Left lung (tissue), 14 donors: ENCODE measurements at regions of chr1 and their contacts with region 1.

Region 1: DNA sequence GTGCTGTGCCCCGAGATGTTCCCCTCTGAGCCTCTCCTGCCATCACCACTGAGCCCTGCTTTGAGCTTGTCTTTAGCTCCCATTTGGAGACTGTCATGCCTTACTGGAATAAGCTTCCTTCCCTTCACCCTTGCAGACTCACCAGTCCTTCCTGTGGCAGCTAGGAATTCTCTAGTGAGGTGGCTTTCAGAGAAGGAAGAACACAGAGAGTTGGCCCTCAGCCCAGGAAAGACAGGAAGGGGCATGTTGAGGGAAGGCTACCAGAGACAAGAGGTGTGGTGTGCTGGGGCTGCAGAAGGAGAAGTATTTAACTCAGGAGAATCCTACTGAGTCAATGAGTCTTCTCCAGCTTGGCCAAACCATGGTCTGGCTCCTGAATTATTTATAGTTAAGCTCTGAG is 76.3 kb downstream of the UCK2 start:
- DNase-seq: no peak
- ATAC-seq: no peak
- H3K4me3 ChIP-seq: no peak overlapping the region
- H3K27ac ChIP-seq: no peak overlapping the region
- H3K4me1 ChIP-seq: peaks cover 5% of the 10 kb centered on the region in 2 donors
- H3K27me3 ChIP-seq: no peaks in the 10 kb centered on the region
- CTCF ChIP-seq: no peak

Region 2: GRCh38 chr1:165827268-165828102 is 76.2 kb before region 1 on chr1 and contains the start of gene UCK2:
- intact Hi-C with region 1: loop called in 1 of 2 experiments (anchors 10 kb)
- DNase-seq: peak; percentile 80 to 93 (median 82)
- ATAC-seq: peak; percentile 93
- H3K4me3 ChIP-seq: peak within 1 kb of the TSS; percentile 76 to 85
- H3K27ac ChIP-seq: peak within 1 kb of the TSS; percentile 57 to 80
- H3K4me1 ChIP-seq: peaks cover 4 to 16% of the 10 kb centered on the region in 2 donors
- H3K27me3 ChIP-seq: peaks cover 0 to 17% of the 10 kb centered on the region in 2 donors
- CTCF ChIP-seq: peak in 1 of 2 donors; percentile 22
- polyA plus RNA-seq, gene UCK2: 18.0 to 25.7 (median 22.2) TPM